Esophagus muscularis mucosa (tissue), 4 donors: ENCODE measurements at regions of chr15 and their contacts with region 1.

Region 1: DNA sequence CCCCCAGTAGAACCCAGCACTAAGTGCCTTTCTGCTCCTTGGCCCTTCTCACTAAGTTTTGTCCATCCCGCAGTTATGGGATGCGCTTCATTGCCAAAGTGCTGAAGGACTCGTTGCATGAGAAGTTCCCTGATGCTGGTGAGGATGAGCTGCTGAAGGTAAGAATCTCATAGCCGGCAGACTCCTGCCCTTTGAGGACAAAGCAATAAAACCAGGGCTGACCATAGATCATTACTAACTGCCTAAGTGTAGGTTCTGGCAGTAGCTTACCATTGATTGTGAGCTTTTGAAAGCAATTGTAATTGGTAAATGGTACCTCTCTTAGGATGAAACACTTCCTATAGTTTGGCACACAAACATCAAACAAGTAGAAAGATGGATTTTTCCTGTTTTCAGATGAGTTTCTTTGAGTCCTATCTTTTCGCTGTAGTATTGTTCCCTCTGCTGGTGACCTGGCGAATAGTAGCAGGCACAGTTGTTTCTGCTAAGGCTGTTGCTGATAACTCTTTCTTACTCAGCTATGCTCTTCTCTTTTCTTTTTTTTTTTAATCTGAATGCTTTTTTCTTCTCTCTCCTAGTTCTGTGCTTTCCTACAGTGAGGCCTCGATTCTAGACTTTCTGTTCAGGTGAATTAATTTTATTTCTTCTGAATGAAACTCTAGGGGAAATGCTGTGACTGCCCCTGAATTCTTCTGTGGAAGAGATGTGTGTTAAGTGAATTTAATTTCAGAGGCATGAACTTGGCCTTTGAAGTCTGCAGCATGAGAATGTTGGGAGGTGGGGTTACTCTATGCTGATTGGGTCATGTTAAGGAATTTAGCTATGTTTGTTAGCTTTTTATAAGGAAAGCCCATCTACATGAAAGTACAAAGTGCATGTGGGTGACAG is 47.4 kb upstream of the CRTC3 start:
- DNase-seq: no peak
- H3K4me3 ChIP-seq: no peak overlapping the region
- H3K27ac ChIP-seq: peak overlapping the region in 2 of 4 donors; percentile 12 to 19
- H3K4me1 ChIP-seq: peaks cover 0 to 6% (median 3%) of the 10 kb centered on the region in 4 donors
- H3K27me3 ChIP-seq: no peaks in the 10 kb centered on the region
- CTCF ChIP-seq: peak; percentile 69 to 80 (median 76)
- EP300 ChIP-seq: no peak
- POLR2A ChIP-seq: no peak

Region 2: DNA sequence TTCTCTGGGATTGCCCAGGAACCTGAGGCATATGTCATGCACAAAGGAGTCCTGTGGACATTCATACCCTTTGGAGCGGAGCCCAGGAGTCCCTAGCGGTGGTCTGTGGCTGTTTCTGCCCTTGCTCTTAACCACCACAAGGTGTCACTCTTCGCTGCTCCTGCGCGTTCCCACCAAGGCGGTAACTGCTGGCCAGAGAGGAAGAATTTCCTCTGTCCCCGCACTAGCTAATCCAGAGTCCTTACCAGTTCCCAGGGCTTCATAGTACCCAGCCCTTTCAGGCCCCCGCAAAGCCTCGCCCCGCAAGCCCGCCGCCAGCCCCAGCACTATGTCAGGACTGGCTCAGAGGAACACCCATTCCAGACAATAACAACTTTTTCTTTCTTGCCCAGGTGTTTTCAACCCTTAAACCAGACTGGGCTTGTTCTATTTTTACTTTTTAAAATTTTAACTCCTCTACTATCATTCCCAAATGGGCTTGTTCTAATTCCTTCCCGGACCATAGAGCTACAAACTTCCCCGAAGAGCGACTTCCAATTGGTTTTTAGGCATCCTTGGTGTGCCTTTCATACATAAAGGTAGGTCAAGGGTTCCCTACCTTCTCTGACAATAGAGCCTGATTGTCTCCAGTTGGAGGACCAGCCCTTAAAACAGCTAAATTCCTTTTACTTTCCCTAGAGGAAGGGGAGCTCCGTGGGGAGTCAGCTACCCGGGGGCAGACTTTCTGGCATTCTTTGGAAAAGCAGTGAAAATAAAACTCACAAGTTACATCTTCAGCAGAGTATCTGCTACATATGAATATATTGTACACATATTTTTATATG is 162.1 kb before region 1 on chr15:
- intact Hi-C with region 1: loop called (anchors 2 kb)
- DNase-seq: peak; percentile 93
- H3K4me3 ChIP-seq: peak overlapping the region in 1 of 4 donors; percentile 25
- H3K27ac ChIP-seq: peak overlapping the region; percentile 0 to 49 (median 30)
- H3K4me1 ChIP-seq: peaks cover 21 to 32% (median 30%) of the 10 kb centered on the region in 4 donors
- H3K27me3 ChIP-seq: no peaks in the 10 kb centered on the region
- CTCF ChIP-seq: peak; percentile 97 to 98 (median 98)
- EP300 ChIP-seq: no peak
- POLR2A ChIP-seq: no peak

Region 3: GRCh38 chr15:90362936-90363212 is 119.5 kb before region 1 on chr15:
- intact Hi-C with region 1: loop called (anchors 5 kb)
- DNase-seq: no peak
- H3K4me3 ChIP-seq: no peak overlapping the region
- H3K27ac ChIP-seq: peak overlapping the region; percentile 78 to 85 (median 82)
- H3K4me1 ChIP-seq: peaks cover 22 to 48% (median 46%) of the 10 kb centered on the region in 4 donors
- H3K27me3 ChIP-seq: no peaks in the 10 kb centered on the region
- CTCF ChIP-seq: no peak
- EP300 ChIP-seq: no peak
- POLR2A ChIP-seq: no peak

Region 4: DNA sequence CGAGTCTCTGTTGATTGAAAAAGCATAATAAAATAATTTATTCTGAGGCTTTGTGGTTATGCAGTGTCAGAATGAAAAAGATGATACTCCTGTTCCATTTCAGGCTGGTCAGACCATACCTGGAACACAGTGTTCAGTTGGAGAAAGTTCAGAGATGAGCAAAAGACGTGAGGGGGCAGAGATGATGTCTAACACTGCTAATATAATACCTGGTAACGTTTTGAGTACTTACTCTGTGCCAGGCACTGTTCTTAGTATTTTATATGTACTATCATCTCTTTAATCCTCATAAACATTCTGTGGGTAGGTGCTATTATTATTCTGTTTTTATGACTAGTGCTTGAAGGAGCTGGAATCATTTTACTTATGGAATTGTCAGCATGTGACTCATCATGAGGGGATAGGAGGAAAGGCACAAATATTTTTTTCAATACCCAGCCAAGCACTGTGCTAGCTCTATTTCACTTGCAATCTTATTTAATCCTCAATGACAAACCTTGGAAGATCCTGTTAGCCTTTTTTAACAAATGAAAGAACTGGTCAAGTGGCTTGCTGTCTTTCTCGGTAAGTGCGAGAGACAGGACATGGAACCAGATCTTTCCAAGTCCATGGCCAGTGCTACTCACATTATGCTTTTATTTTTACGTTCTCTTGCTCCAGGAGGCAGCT is 62.5 kb before region 1 on chr15:
- intact Hi-C with region 1: no loop called
- DNase-seq: no peak
- H3K4me3 ChIP-seq: peak overlapping the region; percentile 14 to 31 (median 26)
- H3K27ac ChIP-seq: peak overlapping the region; percentile 79 to 88 (median 85)
- H3K4me1 ChIP-seq: peaks cover 66 to 80% (median 76%) of the 10 kb centered on the region in 4 donors
- H3K27me3 ChIP-seq: no peaks in the 10 kb centered on the region
- CTCF ChIP-seq: no peak
- EP300 ChIP-seq: peak; percentile 73
- POLR2A ChIP-seq: no peak

Region 5: DNA sequence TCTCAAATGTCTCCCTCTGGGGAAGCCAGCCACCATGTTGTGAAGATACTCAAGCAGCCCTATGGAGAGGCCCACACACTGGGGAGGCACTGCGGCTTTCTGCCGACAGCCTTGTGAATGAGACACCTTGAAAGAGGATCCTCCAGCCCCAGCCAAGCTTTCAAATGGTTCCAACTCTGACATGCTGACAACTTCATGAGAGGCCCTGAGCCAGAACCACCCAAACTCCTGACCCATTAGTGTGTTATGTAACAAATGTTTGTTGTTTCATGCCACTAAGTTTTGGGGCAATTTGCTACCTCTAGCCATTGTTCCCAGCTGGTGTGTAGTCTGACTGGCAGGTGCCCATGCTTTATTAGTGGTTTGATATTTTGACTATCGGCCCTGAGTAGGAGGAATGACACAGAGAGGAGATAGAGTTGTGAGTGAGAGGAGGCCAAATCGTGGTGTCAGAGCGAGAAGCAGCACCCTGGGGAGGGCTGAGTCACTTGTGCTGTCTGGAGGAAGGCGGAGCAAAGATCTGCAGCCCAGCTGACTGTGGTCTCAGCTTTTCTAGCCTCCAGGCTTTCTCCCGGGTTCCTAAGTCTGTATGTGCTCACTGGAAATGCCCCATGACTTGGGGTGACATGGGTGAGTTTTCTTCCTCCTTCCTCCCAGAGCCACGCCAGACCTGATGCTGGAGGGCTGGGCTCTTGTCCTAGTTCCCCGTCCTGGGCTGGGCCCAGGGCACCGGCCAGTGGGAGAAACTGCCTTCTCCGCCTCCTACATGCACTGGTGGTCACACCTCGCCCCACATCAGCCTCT is 178.0 kb after region 1 on chr15:
- intact Hi-C with region 1: no loop called
- DNase-seq: no peak
- H3K4me3 ChIP-seq: peak overlapping the region in 2 of 4 donors; percentile 22 to 34
- H3K27ac ChIP-seq: peak overlapping the region; percentile 54 to 79 (median 70)
- H3K4me1 ChIP-seq: peaks cover 13 to 29% (median 21%) of the 10 kb centered on the region in 4 donors
- H3K27me3 ChIP-seq: no peaks in the 10 kb centered on the region
- CTCF ChIP-seq: no peak
- EP300 ChIP-seq: no peak
- POLR2A ChIP-seq: no peak